ENCODE measurements at regions of chr6 and their contacts with region 1.

Region 1: GRCh38 chr6:7910654-7911344 is at the start of gene TXNDC5:
- DNase-seq: peak; percentile 84 to 91 (median 87)
- ATAC-seq: peak; percentile 76 to 94 (median 90)
- H3K4me3 ChIP-seq: peak within 1 kb of the TSS; percentile 57 to 97 (median 74)
- H3K27ac ChIP-seq: peak within 1 kb of the TSS; percentile 14 to 88 (median 85)
- H3K4me1 ChIP-seq: peaks cover 0 to 38% (median 17%) of the 10 kb centered on the region in 12 donors
- H3K27me3 ChIP-seq: no peaks in the 10 kb centered on the region
- CTCF ChIP-seq: no peak
- POLR2A ChIP-seq: peak in 1 of 2 donors; percentile 43
- total RNA-seq, gene TXNDC5: 33.4 to 110 (median 43.6) TPM

Region 2: GRCh38 chr6:7969361-7969760 is 58.6 kb after region 1 on chr6:
- intact Hi-C with region 1: loop called in 4 of 10 experiments (anchors 2 to 10 kb)
- DNase-seq: no peak
- ATAC-seq: no peak
- H3K4me3 ChIP-seq: no peak overlapping the region
- H3K27ac ChIP-seq: no peak overlapping the region
- H3K4me1 ChIP-seq: peaks cover 0 to 4% (median 0%) of the 10 kb centered on the region in 12 donors
- H3K27me3 ChIP-seq: no peaks in the 10 kb centered on the region
- CTCF ChIP-seq: no peak
- POLR2A ChIP-seq: no peak

Region 3: DNA sequence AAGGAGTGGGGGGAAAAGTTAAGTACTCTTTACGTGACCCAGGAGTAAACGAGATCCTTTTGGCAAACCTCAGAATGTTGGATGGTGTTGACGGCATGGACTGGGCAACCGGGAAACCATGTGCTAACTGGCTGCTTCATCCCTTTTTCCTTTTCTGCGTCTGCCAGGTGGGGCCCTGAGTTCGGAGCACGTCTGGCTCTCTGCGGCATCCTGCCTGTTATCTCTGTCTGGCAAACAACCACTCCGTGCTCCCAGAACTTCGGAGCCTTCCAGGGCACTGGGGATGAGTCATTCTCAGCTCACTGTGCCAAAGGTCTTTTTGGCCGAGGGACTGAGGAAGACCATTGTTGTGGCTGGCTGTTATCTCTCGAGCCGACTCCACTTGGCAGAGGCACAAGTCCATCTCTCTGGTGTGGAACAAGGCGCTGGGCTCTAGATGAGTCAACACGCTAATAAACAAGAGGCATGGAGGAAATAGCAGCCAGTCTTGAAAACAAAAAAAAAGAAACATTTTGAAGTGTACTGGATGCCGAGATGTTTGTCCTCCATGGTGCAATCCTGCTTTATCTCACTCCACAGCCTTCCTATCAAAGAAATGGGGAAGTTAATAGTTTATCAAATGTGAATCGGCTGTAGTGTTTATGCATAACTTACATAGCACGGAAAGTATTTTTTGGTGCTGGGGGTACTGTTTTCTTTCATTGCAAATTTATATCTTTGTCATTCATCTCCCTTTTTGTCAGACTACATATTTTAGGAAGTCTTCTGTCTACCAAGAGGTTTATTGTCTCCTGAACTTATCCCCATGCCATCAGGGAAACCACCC is 64.4 kb after region 1 on chr6:
- intact Hi-C with region 1: loop called in 5 of 10 experiments (anchors 1 to 10 kb)
- DNase-seq: peak; percentile 79 to 94 (median 87)
- ATAC-seq: peak; percentile 95 to 98 (median 96)
- H3K4me3 ChIP-seq: peak overlapping the region in 8 of 12 donors; percentile 2 to 28 (median 18)
- H3K27ac ChIP-seq: peak overlapping the region in 9 of 12 donors; percentile 14 to 74 (median 33)
- H3K4me1 ChIP-seq: peaks cover 0 to 28% (median 16%) of the 10 kb centered on the region in 12 donors
- H3K27me3 ChIP-seq: no peaks in the 10 kb centered on the region
- CTCF ChIP-seq: no peak
- POLR2A ChIP-seq: no peak

Region 4: DNA sequence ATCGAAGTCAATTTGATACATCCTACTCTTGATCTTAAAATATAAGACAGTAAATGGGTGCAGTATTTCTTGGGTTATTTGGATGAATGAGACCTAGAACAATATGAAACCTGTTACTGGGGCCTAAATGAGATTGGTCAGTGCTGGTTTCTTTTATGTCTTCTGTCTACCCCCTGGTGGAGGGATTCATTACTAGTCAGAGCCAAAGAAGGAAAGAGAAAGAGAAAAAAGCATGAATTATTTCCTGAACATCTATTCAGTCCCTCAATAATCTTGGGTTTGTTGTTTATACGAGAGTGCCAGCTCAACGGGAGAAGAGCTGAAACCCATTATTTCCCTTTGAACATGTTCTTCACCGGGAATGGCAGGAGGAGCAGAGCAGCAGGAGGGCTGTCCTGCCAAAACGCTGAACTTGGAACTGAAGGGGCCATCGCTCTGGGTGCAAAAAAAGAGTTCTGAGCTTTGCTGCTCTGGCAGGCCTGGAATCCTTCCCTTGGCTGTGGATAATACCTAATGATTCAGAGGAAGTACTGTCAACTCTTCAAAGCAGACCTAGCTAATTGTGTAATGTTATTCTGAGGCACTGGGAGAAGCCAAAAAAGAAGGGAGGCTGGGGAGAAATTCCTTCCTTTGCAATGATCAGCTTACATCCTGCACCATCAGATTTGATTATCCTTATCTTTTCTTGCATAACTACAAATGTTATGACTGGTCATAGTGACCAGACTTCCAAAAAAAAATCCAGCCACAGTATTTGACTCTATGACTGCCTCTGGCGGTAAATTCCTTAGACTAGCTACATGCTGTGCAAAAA is 81.4 kb after region 1 on chr6:
- intact Hi-C with region 1: loop called in 4 of 10 experiments (anchors 5 to 10 kb)
- DNase-seq: peak in 3 of 5 donors; percentile 23 to 35 (median 30)
- ATAC-seq: peak; percentile 55 to 89 (median 82)
- H3K4me3 ChIP-seq: no peak overlapping the region
- H3K27ac ChIP-seq: peak overlapping the region in 6 of 12 donors; percentile 5 to 46 (median 25)
- H3K4me1 ChIP-seq: peaks cover 0 to 27% (median 7%) of the 10 kb centered on the region in 12 donors
- H3K27me3 ChIP-seq: no peaks in the 10 kb centered on the region
- CTCF ChIP-seq: peak; percentile 24 to 58 (median 46)
- POLR2A ChIP-seq: no peak

Region 5: GRCh38 chr6:8000188-8000596 is 89.4 kb after region 1 on chr6:
- intact Hi-C with region 1: loop called in 6 of 10 experiments (anchors 5 to 10 kb)
- DNase-seq: no peak
- ATAC-seq: peak in 3 of 4 donors; percentile 54 to 69 (median 69)
- H3K4me3 ChIP-seq: no peak overlapping the region
- H3K27ac ChIP-seq: peak overlapping the region in 5 of 12 donors; percentile 2 to 24 (median 11)
- H3K4me1 ChIP-seq: peaks cover 0 to 20% (median 6%) of the 10 kb centered on the region in 12 donors
- H3K27me3 ChIP-seq: no peaks in the 10 kb centered on the region
- CTCF ChIP-seq: no peak
- POLR2A ChIP-seq: no peak

Region 6: GRCh38 chr6:8628063-8628462 is 717.3 kb after region 1 on chr6:
- intact Hi-C with region 1: no loop called
- DNase-seq: no peak
- ATAC-seq: no peak
- H3K4me3 ChIP-seq: no peak overlapping the region
- H3K27ac ChIP-seq: no peak overlapping the region
- H3K4me1 ChIP-seq: no peaks in the 10 kb centered on the region
- H3K27me3 ChIP-seq: no peaks in the 10 kb centered on the region
- CTCF ChIP-seq: no peak
- POLR2A ChIP-seq: no peak